Activated CD4-positive, alpha-beta T cell treated with anti-CD3 and anti-CD28 coated beads for 36 hours (primary cell): ENCODE measurements at regions of chr12 and their contacts with region 1.

Region 1: GRCh38 chr12:57063991-57064685 is 14.2 kb upstream of the MYO1A start:
- DNase-seq: peak; percentile 80
- ATAC-seq: peak; percentile 79
- H3K4me3 Mint-ChIP-seq: peak overlapping the region; percentile 76
- H3K27ac Mint-ChIP-seq: peak overlapping the region; percentile 98
- H3K4me1 Mint-ChIP-seq: peaks cover 66% of the 10 kb centered on the region
- H3K27me3 Mint-ChIP-seq: no peaks in the 10 kb centered on the region

Region 2: DNA sequence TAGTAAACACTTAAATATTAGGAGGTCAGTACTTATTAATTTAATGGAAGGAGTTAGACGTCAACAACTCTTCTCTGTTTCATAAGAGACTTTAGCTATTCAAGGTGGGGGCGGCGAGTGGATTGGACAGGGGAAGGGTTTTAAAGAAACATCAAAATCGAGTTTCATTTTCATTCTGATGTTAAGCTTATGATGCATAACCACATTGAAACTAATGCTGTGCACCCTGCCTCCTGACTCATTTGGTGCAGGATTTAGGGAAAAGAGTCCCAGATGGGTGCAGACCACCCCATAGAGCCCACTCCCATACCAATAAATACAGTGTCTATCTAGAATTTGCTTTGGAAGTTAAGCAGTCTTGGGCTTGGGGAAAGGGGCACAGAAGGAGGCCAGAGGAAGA is 65.2 kb before region 1 on chr12:
- CTCF ChIA-PET with region 1: interaction called, 207 read pairs
- POLR2A ChIA-PET with region 1: no interaction called
- intact Hi-C with region 1: loop called in 1 of 2 experiments (anchors 2 kb)
- DNase-seq: peak; percentile 82
- ATAC-seq: peak; percentile 87
- H3K4me3 Mint-ChIP-seq: no peak overlapping the region
- H3K27ac Mint-ChIP-seq: peak overlapping the region; percentile 38
- H3K4me1 Mint-ChIP-seq: peaks cover 48% of the 10 kb centered on the region
- H3K27me3 Mint-ChIP-seq: no peaks in the 10 kb centered on the region

Region 3: DNA sequence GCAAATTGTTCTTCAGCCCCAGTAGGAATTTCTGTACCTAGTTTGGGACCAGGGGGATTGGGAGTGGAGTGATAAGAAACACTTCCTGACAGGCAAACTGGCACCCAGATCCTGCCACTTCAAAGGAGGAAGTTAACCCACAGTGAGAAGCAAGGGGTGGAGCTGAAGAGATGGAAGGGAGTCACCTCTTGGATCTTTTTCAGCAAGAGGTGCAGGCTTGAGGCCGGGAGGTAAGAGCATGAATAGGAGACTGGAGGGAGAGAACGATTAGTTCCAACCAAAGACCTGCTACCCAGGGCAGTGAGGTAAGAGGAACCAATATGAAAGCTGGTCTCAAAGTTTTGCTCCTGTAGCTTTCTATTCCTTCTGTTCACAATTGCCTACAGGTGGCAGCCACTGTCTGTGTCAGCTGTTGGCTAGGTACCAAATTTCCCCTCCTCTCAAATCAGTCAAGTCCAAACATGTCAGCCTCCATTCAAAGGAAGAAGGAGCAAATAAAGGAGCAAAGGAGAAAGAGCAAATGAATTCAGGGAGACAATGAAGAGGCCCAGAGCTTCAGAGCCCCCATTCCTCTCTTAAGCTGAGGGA is 32.9 kb before region 1 on chr12:
- CTCF ChIA-PET with region 1: interaction called, 25 read pairs
- POLR2A ChIA-PET with region 1: no interaction called
- intact Hi-C with region 1: loop called in 1 of 2 experiments (anchors 5 kb)
- DNase-seq: peak; percentile 44
- ATAC-seq: peak; percentile 43
- H3K4me3 Mint-ChIP-seq: no peak overlapping the region
- H3K27ac Mint-ChIP-seq: peak overlapping the region; percentile 55
- H3K4me1 Mint-ChIP-seq: peaks cover 46% of the 10 kb centered on the region
- H3K27me3 Mint-ChIP-seq: no peaks in the 10 kb centered on the region

Region 4: DNA sequence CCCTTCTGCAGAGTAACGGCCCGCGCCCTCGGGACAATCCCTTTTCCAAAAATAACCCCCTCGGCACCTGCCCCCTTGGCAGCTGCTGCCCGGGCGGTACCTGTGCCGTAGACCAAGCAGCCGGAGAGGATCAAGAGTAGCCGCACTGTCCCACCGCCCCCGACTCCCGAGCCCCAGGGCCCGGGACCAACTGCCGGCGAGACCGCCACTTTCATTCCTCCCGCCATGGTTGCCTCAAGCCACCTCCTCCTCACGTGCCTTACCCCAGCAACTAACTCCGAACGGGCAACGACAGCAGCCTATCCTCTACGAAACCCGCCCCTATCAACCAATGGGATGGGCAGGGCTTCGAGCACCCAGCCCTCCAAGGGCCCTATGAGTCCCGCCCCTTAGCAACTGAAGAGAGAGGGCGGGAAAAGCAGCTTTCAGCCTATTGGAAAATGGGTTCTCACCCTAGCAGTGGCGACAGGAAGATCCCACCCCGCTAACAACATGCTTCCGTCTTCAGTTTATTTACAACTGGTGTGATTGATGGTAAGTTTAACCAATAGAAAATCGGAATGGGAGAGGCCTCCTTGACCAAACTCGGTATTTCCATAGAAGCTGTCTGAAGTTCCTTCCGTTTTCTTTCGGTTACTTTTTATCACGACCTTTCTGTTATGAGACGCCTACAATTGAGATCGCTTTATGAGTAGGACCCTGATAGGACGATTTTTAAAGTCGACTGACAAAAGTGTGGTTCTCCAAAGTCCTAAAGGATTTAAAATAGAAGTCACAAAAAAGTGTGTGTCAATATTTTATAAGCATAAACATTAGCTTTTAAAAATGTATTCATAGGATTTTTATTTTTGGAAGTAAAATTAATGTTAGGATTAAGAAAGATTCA is 14.6 kb after region 1 on chr12 and contains the start of gene NEMP1:
- CTCF ChIA-PET with region 1: interaction called, 38 read pairs
- POLR2A ChIA-PET with region 1: interaction called, 30 read pairs
- intact Hi-C with region 1: loop called (anchors 1 kb)
- DNase-seq: peak; percentile 97
- ATAC-seq: peak; percentile 95
- H3K4me3 Mint-ChIP-seq: peak within 1 kb of the TSS; percentile 97
- H3K27ac Mint-ChIP-seq: peak within 1 kb of the TSS; percentile 94
- H3K4me1 Mint-ChIP-seq: peaks cover 29% of the 10 kb centered on the region
- H3K27me3 Mint-ChIP-seq: no peaks in the 10 kb centered on the region
- total RNA-seq, gene NEMP1: 79.0 to 81.1 TPM

Region 5: GRCh38 chr12:57430931-57431720 is 367.0 kb after region 1 on chr12 and contains the start of gene R3HDM2:
- CTCF ChIA-PET with region 1: no interaction called
- POLR2A ChIA-PET with region 1: no interaction called
- intact Hi-C with region 1: loop called in 1 of 2 experiments (anchors 5 kb)
- DNase-seq: peak; percentile 97
- ATAC-seq: peak; percentile 95
- H3K4me3 Mint-ChIP-seq: peak within 1 kb of the TSS; percentile 89
- H3K27ac Mint-ChIP-seq: peak within 1 kb of the TSS; percentile 100
- H3K4me1 Mint-ChIP-seq: peaks cover 35% of the 10 kb centered on the region
- H3K27me3 Mint-ChIP-seq: no peaks in the 10 kb centered on the region
- total RNA-seq, gene R3HDM2: 45.9 to 52.5 TPM